Activated naive CD4-positive, alpha-beta T cell treated with anti-CD3 and anti-CD28 coated beads for 36 hours (primary cell): ENCODE measurements at regions of chr11 and their contacts with region 1.

Region 1: GRCh38 chr11:5476184-5476819 is 12.2 kb upstream of the OR52D1 start:
- DNase-seq: peak; percentile 64
- H3K4me3 Mint-ChIP-seq: no peak overlapping the region
- H3K27ac Mint-ChIP-seq: no peak overlapping the region
- H3K4me1 Mint-ChIP-seq: no peaks in the 10 kb centered on the region
- H3K27me3 Mint-ChIP-seq: peaks cover 11% of the 10 kb centered on the region

Region 2: DNA sequence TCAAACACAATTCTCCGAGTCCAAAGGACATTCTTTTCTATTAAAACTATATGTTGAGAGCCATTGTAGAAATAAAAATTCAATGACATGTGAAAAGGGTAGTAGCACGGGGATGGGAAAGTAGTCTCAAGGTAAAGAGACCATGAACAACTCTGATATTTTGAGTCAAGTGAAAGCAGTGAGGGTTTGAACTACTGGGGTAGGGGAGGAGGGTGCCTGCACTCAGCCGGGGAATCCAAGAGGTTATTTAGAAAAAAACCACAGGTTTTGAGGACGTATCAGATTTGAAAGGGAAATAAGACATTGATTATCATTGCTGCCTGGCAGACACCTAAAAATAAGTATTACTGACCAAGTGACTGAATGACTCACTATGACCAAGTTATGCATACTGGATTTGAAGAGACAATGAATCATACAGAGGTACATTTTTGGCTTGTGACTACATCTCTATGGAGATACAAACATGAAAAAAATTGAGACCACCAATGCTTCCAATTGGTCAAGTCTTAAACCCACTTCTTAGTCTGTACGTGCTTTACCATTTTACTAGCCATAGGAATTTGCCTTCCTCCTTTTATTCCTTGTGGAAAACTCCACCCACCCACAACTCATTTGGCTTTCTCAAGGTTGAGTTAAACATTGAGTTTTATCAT is 74.3 kb after region 1 on chr11:
- CTCF ChIA-PET with region 1: no interaction called
- intact Hi-C with region 1: loop called (anchors 5 kb)
- DNase-seq: no peak
- H3K4me3 Mint-ChIP-seq: no peak overlapping the region
- H3K27ac Mint-ChIP-seq: no peak overlapping the region
- H3K4me1 Mint-ChIP-seq: no peaks in the 10 kb centered on the region
- H3K27me3 Mint-ChIP-seq: no peaks in the 10 kb centered on the region

Region 3: DNA sequence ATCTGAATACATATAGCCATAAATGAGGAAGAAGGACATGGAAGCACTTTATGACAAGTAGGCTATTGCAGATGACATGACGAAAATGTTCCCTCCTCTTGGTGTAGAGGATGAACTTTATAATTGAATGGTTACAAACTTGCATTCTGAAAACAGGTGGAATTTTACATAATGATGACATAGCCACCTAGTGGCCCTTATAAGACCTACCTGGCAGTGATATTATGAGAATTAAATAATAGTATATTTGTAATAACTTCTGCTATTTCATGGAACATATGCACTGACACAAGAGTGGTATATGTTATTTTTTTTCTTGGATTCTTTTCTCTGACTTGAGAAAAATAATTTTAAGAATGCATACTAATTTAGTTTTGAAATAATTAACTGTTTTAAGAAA is 236.2 kb after region 1 on chr11:
- CTCF ChIA-PET with region 1: interaction called, 5 read pairs
- intact Hi-C with region 1: loop called (anchors 1 kb)
- DNase-seq: no peak
- H3K4me3 Mint-ChIP-seq: no peak overlapping the region
- H3K27ac Mint-ChIP-seq: peak overlapping the region; percentile 7
- H3K4me1 Mint-ChIP-seq: peaks cover 3% of the 10 kb centered on the region
- H3K27me3 Mint-ChIP-seq: no peaks in the 10 kb centered on the region

Region 4: DNA sequence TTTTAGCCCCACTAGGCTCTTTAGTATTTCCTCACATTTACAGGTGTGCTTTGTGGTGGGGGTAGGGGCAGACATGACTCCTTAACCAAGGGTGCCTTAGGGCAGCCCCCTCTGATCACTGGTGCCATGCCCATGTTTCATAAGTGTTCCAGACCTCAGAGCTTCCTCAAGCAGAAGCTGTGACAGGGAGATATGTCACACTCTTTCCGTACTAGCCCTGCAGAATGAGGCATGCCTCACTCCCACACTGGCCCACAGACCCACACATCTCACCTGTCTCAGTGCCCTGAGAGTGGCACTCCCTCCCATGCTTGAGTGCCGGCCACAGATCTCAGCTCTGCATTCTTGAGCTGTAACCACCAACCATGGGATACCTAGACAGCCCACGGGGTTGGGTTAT is 608.3 kb after region 1 on chr11:
- CTCF ChIA-PET with region 1: no interaction called
- intact Hi-C with region 1: no loop called
- DNase-seq: no peak
- H3K4me3 Mint-ChIP-seq: no peak overlapping the region
- H3K27ac Mint-ChIP-seq: no peak overlapping the region
- H3K4me1 Mint-ChIP-seq: no peaks in the 10 kb centered on the region
- H3K27me3 Mint-ChIP-seq: peaks cover 3% of the 10 kb centered on the region